Heart left ventricle (tissue), 16 donors: ENCODE measurements at regions of chr1 and their contacts with region 1.

Region 1: GRCh38 chr1:86499987-86500593 is 31.4 kb downstream of the CLCA1 start:
- DNase-seq: no peak
- ATAC-seq: no peak
- H3K4me3 ChIP-seq: no peak overlapping the region
- H3K27ac ChIP-seq: peak overlapping the region in 6 of 12 donors; percentile 10 to 94 (median 41)
- H3K4me1 ChIP-seq: peaks cover 0 to 37% (median 16%) of the 10 kb centered on the region in 12 donors
- H3K27me3 ChIP-seq: no peaks in the 10 kb centered on the region
- CTCF ChIP-seq: peak; percentile 73 to 99 (median 89)
- POLR2A ChIP-seq: no peak

Region 2: GRCh38 chr1:86370601-86371022 is 129.5 kb before region 1 on chr1:
- intact Hi-C with region 1: loop called in 3 of 10 experiments (anchors 5 to 10 kb)
- DNase-seq: no peak
- ATAC-seq: no peak
- H3K4me3 ChIP-seq: no peak overlapping the region
- H3K27ac ChIP-seq: no peak overlapping the region
- H3K4me1 ChIP-seq: no peaks in the 10 kb centered on the region
- H3K27me3 ChIP-seq: no peaks in the 10 kb centered on the region
- CTCF ChIP-seq: no peak
- POLR2A ChIP-seq: no peak

Region 3: DNA sequence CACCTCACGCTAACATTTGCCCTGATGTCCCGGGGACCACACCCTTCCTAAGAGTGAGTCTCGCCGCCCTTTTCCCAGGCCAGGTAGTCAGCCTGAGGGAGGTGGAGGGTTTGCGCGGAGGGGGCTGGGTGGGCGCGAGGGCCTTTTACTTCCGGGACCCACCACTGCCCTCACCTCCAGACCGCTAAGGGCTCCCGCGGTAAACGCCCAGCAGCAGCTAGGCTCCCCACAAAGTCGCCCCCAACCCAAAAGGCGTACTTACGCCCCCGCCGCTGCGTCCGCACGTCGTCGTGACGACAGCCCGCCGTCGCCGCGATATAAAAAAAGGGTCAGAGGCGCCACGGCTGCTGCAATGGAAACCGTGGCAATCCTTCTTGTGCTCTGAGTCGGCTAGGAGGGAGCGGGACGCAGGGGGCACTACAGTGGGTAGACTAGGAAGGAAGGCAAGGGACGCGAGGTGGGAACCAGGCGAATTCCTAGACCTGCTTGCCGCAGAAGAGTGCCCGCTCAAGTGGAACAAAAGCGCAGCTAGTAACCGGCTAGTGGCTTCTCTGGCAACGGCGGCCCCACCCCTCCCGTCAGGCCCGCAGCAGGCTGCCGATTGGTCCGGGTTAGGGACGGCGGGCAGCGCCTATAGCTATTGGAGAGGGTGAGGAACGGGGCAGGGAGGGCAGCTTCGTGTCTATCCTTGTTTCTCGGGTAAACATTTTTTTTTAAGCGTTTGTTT is 104.2 kb before region 1 on chr1 and contains the start of gene ODF2L:
- intact Hi-C with region 1: loop called in 1 of 10 experiments (anchors 5 kb)
- DNase-seq: peak; percentile 90 to 95 (median 92)
- ATAC-seq: peak; percentile 99 to 100 (median 100)
- H3K4me3 ChIP-seq: peak within 1 kb of the TSS; percentile 55 to 95 (median 82)
- H3K27ac ChIP-seq: peak within 1 kb of the TSS in 11 of 12 donors; percentile 66 to 89 (median 81)
- H3K4me1 ChIP-seq: peaks cover 0 to 30% (median 12%) of the 10 kb centered on the region in 12 donors
- H3K27me3 ChIP-seq: no peaks in the 10 kb centered on the region
- CTCF ChIP-seq: no peak
- POLR2A ChIP-seq: peak in 1 of 2 donors; percentile 78
- total RNA-seq, gene ODF2L: 6.2 to 23.7 (median 12.3) TPM

Region 4: DNA sequence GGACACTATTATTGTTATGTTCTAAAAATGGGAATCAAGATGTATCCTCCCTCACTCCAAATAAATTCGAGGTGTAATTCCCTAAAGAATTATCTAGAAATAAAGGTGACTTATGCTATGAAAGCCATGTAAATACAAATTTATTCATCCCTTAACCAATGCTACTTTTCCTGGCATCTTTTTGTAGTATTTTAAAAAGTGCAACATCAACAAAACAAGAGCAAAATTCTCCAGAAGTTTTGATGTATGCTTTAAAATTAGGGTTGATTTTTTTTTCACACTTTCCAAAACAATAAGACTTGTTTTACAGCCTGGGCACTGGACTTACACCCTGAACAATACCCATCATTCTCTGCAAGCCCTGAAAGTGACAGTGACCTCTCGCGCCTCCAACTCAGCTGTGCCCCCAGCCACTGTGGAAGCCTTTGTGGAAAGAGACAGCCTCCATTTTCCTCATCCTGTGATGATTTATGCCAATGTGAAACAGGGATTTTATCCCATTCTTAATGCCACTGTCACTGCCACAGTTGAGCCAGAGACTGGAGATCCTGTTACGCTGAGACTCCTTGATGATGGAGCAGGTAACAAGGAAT is 52.8 kb before region 1 on chr1:
- intact Hi-C with region 1: no loop called
- DNase-seq: no peak
- ATAC-seq: no peak
- H3K4me3 ChIP-seq: no peak overlapping the region
- H3K27ac ChIP-seq: no peak overlapping the region
- H3K4me1 ChIP-seq: no peaks in the 10 kb centered on the region
- H3K27me3 ChIP-seq: no peaks in the 10 kb centered on the region
- CTCF ChIP-seq: no peak
- POLR2A ChIP-seq: no peak

Region 5: DNA sequence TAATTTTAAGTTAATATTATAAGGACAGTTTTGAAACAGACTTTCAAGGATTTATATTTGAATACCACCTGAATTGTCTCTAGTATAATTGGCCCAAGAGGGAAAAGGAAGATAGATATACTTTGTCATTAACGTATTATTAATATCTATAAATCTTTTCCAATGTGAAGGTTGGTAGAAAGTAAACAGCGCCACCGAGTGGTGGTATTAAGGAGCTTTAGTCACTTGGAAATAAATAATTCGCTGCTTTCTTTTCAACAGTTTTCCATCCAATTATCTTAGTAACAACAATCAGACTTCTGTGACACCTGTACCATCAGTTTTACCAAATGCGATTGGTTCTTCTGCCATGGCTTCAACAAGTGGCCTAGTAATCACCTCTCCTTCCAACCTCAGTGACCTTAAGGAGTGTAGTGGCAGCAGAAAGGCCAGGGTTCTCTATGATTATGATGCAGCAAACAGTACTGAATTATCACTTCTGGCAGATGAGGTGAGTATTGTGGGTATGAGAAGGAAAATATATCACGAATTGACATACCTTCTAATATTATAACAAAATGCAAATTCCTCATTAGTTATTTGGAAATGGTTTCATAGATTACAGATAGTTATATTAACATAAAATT is 242.0 kb after region 1 on chr1:
- intact Hi-C with region 1: loop called in 3 of 10 experiments (anchors 5 to 10 kb)
- DNase-seq: peak in 1 of 5 donors; percentile 32
- ATAC-seq: no peak
- H3K4me3 ChIP-seq: no peak overlapping the region
- H3K27ac ChIP-seq: no peak overlapping the region
- H3K4me1 ChIP-seq: peaks cover 0 to 25% (median 8%) of the 10 kb centered on the region in 12 donors
- H3K27me3 ChIP-seq: no peaks in the 10 kb centered on the region
- CTCF ChIP-seq: peak; percentile 55 to 77 (median 67)
- POLR2A ChIP-seq: no peak